Panc1 (cell line): ENCODE measurements at regions of chrX and their contacts with region 1.

Region 1: GRCh38 chrX:15143050-15143824 is 126.6 kb downstream of the ASB9 start:
- DNase-seq: no peak
- ATAC-seq: 0 out of 2 replicates have a peak, but pooled peaks have one; percentile 68
- H3K4me3 ChIP-seq: no peak overlapping the region
- H3K27ac ChIP-seq: no peak overlapping the region
- H3K4me1 ChIP-seq: no peaks in the 10 kb centered on the region
- H3K27me3 ChIP-seq: no peaks in the 10 kb centered on the region
- CTCF ChIP-seq: peak; percentile 73

Region 2: DNA sequence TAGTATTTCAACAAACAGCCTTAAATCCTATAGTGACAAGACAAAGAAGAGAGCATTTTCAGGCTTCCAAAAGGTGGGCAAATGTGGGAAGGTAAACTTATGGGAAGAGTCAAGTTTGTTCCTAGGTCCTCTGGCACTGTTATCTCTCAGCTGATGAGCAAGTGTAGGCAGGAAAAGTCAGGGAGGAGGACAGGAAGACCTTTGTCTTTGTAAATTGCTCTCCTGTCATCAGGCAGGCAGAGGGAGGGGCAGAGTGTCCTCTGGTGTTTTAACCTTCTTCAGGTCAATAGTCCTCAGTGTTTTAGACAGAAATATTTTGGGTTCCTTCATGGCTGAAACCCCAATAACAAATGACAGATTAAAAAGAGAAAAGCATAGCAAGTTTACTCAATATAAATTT is 1100.0 kb before region 1 on chrX:
- CTCF ChIA-PET with region 1: no interaction called
- POLR2A ChIA-PET with region 1: no interaction called
- in situ Hi-C with region 1: no loop called
- intact Hi-C with region 1: loop called (anchors 10 kb)
- DNase-seq: no peak
- ATAC-seq: no peak
- H3K4me3 ChIP-seq: no peak overlapping the region
- H3K27ac ChIP-seq: no peak overlapping the region
- H3K4me1 ChIP-seq: no peaks in the 10 kb centered on the region
- H3K27me3 ChIP-seq: no peaks in the 10 kb centered on the region
- CTCF ChIP-seq: no peak

Region 3: GRCh38 chrX:14528629-14529289 is 614.5 kb before region 1 on chrX:
- CTCF ChIA-PET with region 1: no interaction called
- POLR2A ChIA-PET with region 1: no interaction called
- in situ Hi-C with region 1: no loop called
- intact Hi-C with region 1: loop called (anchors 10 kb)
- DNase-seq: peak; percentile 2
- ATAC-seq: no peak
- H3K4me3 ChIP-seq: no peak overlapping the region
- H3K27ac ChIP-seq: no peak overlapping the region
- H3K4me1 ChIP-seq: no peaks in the 10 kb centered on the region
- H3K27me3 ChIP-seq: no peaks in the 10 kb centered on the region
- CTCF ChIP-seq: peak; percentile 50

Region 4: DNA sequence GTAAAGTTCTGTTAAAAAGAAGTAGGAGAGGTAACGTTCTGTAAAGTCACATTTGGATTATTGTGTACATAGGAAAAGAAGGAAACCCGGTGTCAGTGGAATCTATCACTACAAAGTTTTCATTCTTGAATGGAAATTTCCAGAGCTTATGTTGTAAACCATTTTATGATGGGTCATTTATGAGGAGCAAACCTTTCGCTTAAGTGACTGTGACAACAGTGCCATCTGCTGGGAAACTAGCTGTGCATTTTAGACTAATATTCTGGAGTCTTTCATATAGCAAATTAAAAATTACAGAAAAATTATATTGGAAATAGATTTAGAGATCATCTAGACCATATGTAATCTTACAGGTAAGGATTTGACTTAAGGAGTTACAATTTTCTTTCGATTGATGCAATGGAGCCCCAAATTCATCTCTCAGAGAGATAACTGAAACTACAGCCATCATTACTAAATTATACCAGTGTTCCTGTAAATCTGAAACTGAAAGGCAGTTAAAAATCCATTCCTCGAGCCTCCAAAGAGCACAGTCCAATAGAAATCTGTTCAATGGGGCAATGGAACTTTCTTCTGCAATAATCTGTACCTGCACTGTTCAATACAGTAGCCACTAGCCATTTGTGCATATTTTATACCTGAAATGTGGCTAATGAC is 99.8 kb after region 1 on chrX:
- CTCF ChIA-PET with region 1: no interaction called
- POLR2A ChIA-PET with region 1: no interaction called
- in situ Hi-C with region 1: no loop called
- intact Hi-C with region 1: loop called (anchors 10 kb)
- DNase-seq: peak; percentile 4
- ATAC-seq: no peak
- H3K4me3 ChIP-seq: no peak overlapping the region
- H3K27ac ChIP-seq: no peak overlapping the region
- H3K4me1 ChIP-seq: no peaks in the 10 kb centered on the region
- H3K27me3 ChIP-seq: no peaks in the 10 kb centered on the region
- CTCF ChIP-seq: peak; percentile 59; the same call in 1 of the 2 replicates

Region 5: GRCh38 chrX:15269618-15270521 is 126.6 kb after region 1 on chrX and contains the start of gene ASB9:
- CTCF ChIA-PET with region 1: no interaction called
- POLR2A ChIA-PET with region 1: no interaction called
- in situ Hi-C with region 1: no loop called
- intact Hi-C with region 1: no loop called
- DNase-seq: peak; percentile 15
- ATAC-seq: peak; percentile 97
- H3K4me3 ChIP-seq: peak within 1 kb of the TSS; percentile 22 to 47
- H3K27ac ChIP-seq: peak within 1 kb of the TSS; percentile 74
- H3K4me1 ChIP-seq: no peaks in the 10 kb centered on the region
- H3K27me3 ChIP-seq: no peaks in the 10 kb centered on the region
- CTCF ChIP-seq: no peak
- total RNA-seq, gene ASB9: 6.5 TPM